Esophagus squamous epithelium (tissue), 5 donors: ENCODE measurements at regions of chr9 and their contacts with region 1.

Region 1: GRCh38 chr9:71604197-71605063 is 163.9 kb downstream of the CEMIP2 start:
- DNase-seq: peak; percentile 13
- H3K4me3 ChIP-seq: no peak overlapping the region
- H3K27ac ChIP-seq: no peak overlapping the region
- H3K4me1 ChIP-seq: no peaks in the 10 kb centered on the region
- H3K27me3 ChIP-seq: no peaks in the 10 kb centered on the region
- CTCF ChIP-seq: peak; percentile 66 to 74 (median 72)
- POLR2A ChIP-seq: no peak

Region 2: GRCh38 chr9:71355884-71356283 is 248.5 kb before region 1 on chr9:
- intact Hi-C with region 1: no loop called
- DNase-seq: no peak
- H3K4me3 ChIP-seq: no peak overlapping the region
- H3K27ac ChIP-seq: no peak overlapping the region
- H3K4me1 ChIP-seq: no peaks in the 10 kb centered on the region
- H3K27me3 ChIP-seq: no peaks in the 10 kb centered on the region
- CTCF ChIP-seq: no peak
- POLR2A ChIP-seq: no peak

Region 3: DNA sequence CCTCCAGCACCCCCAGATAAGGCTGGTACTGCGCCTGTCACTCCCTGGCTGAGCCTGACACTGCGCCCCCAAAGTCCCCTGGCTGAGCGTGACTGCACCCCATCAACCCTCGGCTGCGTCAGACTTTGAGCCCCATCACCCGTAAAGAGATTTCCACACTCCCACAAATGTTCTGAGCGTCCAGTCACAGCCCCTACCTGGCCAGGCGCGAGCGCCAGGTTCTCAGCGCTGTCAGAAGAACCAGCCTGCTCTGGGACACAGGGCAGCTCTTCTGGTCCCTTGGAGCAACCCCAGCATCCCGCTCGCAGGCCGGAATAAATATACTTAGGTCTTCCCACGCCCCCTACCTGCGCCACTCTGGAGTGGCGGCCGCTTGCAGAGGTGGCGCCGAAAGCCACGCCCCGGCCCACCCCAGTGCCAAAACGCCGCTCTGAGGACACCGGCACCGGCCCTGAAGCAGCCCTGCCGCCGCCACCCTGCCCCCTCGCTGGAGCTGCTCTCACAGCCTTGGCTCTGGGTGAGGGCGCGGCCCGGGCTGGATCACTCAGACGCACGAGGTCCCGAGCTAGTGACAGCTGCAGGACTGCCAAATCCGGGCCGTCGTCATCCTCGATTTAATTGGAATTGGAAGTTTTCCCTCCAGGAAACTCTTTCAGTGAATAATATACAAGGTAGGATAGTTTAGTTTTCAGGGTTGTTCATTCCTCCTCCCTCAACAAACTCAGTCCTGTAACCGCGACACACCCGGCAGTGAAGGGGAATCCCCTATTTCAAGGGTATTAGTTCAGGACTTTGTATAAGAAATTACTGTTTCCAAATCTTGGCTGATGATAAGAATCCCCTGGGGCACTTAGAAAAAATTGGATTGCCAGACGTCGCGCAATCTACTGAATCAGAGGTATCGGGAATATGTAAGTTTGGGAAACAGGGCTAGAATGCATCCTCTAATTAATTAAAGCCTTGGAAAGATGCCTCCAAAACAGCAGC is 165.0 kb after region 1 on chr9:
- intact Hi-C with region 1: loop called (anchors 5 kb)
- DNase-seq: peak; percentile 51
- H3K4me3 ChIP-seq: peak overlapping the region; percentile 77 to 92 (median 84)
- H3K27ac ChIP-seq: peak overlapping the region; percentile 96 to 99 (median 97)
- H3K4me1 ChIP-seq: peaks cover 22 to 50% (median 24%) of the 10 kb centered on the region in 3 donors
- H3K27me3 ChIP-seq: peaks cover 0 to 13% (median 0%) of the 10 kb centered on the region in 4 donors
- CTCF ChIP-seq: peak in 4 of 6 experiments; percentile 19 to 57 (median 28)
- POLR2A ChIP-seq: peak in 1 of 4 donors; percentile 56